IMR-90 (cell line): ENCODE measurements at regions of chr16 and their contacts with region 1.

Region 1: GRCh38 chr16:55204069-55204468 is 119.9 kb upstream of the IRX6 start:
- DNase-seq: no peak
- ATAC-seq: no peak
- H3K4me3 ChIP-seq: no peak overlapping the region
- H3K27ac ChIP-seq: no peak overlapping the region
- H3K4me1 ChIP-seq: no peaks in the 10 kb centered on the region
- H3K27me3 ChIP-seq: no peaks in the 10 kb centered on the region
- CTCF ChIP-seq: no peak
- POLR2A ChIP-seq: no peak
- RAD21 ChIP-seq: no peak

Region 2: GRCh38 chr16:55184052-55184451 is 20.0 kb before region 1 on chr16:
- CTCF ChIA-PET with region 1: no interaction called
- POLR2A ChIA-PET with region 1: interaction called, 28 read pairs
- dilution Hi-C with region 1: no loop called
- in situ Hi-C with region 1: no loop called
- intact Hi-C with region 1: no loop called
- DNase-seq: no peak
- ATAC-seq: no peak
- H3K4me3 ChIP-seq: no peak overlapping the region
- H3K27ac ChIP-seq: no peak overlapping the region
- H3K4me1 ChIP-seq: no peaks in the 10 kb centered on the region
- H3K27me3 ChIP-seq: no peaks in the 10 kb centered on the region
- CTCF ChIP-seq: no peak
- POLR2A ChIP-seq: no peak
- RAD21 ChIP-seq: no peak